Activated naive CD4-positive, alpha-beta T cell treated with anti-CD3 and anti-CD28 coated beads for 36 hours (primary cell): ENCODE measurements at regions of chr6 and their contacts with region 1.

Region 1: DNA sequence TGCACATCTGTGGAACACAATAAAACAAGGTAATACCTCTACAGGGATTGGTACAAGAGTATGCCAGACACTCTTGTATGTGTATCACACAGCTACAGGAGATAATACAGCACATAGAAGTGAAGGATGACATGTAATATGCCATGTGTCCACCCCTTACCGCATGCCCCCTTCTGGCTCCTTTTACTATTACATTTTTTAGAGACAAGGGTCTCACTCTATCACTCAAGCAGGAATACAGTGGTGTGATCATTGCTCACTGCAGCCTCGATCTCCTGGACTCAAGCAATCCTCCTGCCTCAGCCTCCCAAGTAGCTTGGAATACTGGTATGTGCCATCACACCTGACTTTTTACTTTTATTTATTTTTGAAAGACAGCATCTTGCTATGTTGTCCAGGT is 4.2 kb upstream of the NCR3 start:
- DNase-seq: peak; percentile 56
- H3K4me3 Mint-ChIP-seq: no peak overlapping the region
- H3K27ac Mint-ChIP-seq: peak overlapping the region; percentile 77
- H3K4me1 Mint-ChIP-seq: peaks cover 43% of the 10 kb centered on the region
- H3K27me3 Mint-ChIP-seq: no peaks in the 10 kb centered on the region

Region 2: DNA sequence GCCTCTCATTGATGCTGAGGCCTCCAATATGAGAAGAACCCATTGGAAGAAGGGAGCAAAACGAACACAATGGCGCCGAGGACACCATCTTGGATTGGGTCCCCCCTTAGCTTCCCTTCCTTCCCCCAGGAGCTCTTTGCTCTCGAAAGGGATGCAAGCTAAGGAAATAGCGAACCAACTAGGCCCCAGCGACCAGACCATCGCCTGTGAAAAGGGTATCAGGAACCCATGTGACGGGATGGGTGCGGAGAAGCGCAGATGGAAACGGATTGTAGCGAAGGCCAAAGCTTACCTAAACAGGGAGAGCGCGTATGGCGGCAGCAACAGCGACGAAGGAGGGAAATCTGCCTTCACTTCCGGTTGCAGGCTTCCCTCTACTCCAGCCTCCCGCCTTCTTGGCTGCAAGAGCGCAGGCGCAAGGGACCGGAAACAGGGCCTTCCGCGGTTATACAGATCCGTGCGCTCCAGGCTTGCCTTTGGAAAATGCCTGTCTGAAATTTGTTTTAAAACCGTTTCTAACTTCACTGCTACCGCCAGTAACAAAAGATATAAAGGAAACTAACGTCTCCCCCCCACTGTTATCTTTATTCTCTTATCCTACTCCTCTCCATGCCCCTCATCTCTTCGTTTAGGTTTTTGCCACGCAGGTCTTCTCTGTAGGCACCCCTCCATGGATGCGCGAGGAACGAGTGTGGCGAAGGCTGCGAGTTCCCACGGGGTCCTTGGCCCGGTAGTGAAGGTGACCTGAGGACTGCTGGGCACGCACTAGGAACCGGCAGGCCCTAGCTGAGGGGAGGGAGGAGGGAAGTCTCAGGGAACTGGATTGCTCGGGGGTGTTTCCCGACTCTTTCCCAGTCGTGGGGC is 55.1 kb before region 1 on chr6 and contains the start of gene DDX39B:
- CTCF ChIA-PET with region 1: interaction called, 604 read pairs
- intact Hi-C with region 1: loop called (anchors 1 kb)
- DNase-seq: peak; percentile 95
- H3K4me3 Mint-ChIP-seq: peak within 1 kb of the TSS; percentile 93
- H3K27ac Mint-ChIP-seq: peak within 1 kb of the TSS; percentile 99
- H3K4me1 Mint-ChIP-seq: peaks cover 40% of the 10 kb centered on the region
- H3K27me3 Mint-ChIP-seq: no peaks in the 10 kb centered on the region
- total RNA-seq, gene DDX39B: 600 to 624 TPM

Region 3: GRCh38 chr6:31568537-31568961 is 28.5 kb before region 1 on chr6:
- CTCF ChIA-PET with region 1: interaction called, 618 read pairs
- intact Hi-C with region 1: no loop called
- DNase-seq: peak; percentile 85
- H3K4me3 Mint-ChIP-seq: peak overlapping the region; percentile 34
- H3K27ac Mint-ChIP-seq: peak overlapping the region; percentile 83
- H3K4me1 Mint-ChIP-seq: peaks cover 76% of the 10 kb centered on the region
- H3K27me3 Mint-ChIP-seq: no peaks in the 10 kb centered on the region

Region 4: DNA sequence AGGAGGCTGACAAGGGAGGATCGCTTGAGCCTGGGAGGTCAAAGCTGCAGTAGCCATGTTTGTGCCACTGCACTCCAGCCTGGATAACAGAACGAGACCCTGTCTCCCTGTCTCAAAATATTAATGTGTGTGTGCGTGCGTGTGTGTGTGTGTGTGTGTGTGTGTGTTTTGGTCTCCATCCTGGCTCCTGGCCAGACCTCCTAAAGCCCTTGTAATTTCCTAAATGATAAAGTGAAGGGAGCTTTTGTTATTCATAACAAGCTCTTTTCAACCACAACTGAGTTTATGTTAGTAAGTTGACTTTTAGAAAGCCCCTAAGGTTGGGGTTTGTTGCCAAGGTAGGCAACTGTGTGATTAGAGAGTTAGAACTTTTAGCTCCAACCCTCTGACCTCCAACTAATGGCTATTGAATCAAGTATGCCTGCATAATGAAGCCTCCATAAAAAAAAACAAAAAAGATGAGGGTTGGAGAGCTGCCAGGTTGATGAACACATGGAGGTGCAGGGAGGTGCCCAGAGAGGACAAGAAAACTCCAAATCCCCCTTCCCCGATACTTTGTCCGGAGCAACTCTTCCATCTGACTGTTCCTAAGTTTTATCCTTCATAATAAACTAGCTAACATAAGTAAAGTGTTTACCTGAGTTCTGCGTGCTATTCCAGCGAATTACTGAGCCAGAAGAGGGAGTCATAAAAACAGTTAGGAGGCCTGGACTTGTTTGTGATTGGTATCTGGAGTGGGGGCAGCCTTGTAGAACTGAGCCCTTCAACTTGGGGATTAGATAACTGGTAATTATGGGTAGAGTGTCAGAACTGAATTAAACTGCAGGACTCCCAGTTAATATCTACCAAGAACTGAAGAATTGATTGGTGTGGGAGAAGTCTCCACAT is 12.8 kb after region 1 on chr6:
- CTCF ChIA-PET with region 1: interaction called, 41 read pairs
- intact Hi-C with region 1: no loop called
- DNase-seq: no peak
- H3K4me3 Mint-ChIP-seq: no peak overlapping the region
- H3K27ac Mint-ChIP-seq: no peak overlapping the region
- H3K4me1 Mint-ChIP-seq: peaks cover 5% of the 10 kb centered on the region
- H3K27me3 Mint-ChIP-seq: no peaks in the 10 kb centered on the region